GM12878 (cell line): ENCODE measurements at regions of chr12 and their contacts with region 1.

Region 1: DNA sequence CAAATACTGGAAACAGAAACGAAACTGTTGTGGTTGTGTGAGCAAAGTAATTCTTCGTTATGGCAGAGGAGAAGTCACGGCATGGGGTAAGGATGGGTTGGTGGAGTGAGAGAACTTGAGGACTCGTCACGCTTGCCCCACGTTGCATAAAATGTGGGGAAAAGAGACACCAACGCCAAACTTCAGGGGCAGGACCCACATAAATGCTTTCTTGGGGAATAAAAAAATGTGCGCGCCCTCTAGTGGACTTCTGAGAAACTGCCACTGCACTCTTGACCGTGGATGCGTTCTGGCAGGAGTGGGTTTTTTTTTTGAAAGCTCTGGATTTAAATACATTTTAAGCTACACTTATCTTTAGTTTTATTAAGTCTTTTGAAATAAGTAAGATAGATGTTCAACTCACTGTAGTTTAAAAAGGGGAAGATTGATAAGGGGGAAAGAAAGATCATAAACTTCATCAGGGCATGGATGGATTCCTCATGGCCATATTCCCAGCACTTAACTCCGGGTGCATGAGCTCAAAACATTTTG is 4.1 kb upstream of the IGF1 start:
- DNase-seq: peak; percentile 84
- ATAC-seq: peak; percentile 80
- H3K4me3 ChIP-seq: peak overlapping the region; percentile 48
- H3K27ac ChIP-seq: peak overlapping the region; percentile 100
- H3K4me1 ChIP-seq: peaks cover 54% of the 10 kb centered on the region
- H3K27me3 ChIP-seq: no peaks in the 10 kb centered on the region
- CTCF ChIP-seq: peak; percentile 79 to 91 (median 81)
- EP300 ChIP-seq: peak; percentile 87 to 90; a peak in 3 of 4 replicates
- POLR2A ChIP-seq: peak; percentile 43; the same call in 1 of the 2 replicates
- RAD21 ChIP-seq: peak; percentile 80

Region 2: DNA sequence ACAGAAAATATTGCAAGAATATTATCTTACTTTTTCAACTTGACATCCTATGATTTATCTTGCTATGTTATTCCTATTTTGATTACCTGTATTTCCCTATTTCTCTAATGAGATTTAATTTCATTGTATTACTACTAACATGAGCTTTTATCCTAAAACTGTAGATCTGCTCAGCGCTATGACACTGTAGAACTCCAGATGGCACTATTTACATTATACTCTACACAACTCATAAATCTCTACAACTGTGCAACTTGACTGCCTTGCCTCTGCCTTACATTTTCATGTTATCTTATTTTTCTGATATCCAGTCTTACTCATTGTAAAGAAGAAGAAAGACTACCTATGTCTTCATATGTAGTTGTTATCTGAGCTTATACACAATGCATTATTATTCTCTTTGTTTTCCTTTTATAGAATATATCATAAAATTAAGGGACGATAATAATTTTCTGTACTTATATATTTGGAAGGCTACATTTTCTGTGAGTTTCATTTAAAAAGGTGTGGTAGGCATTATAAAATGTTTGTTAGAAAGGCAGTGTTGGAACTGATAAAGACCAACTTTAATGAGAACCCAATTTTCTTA is 388.7 kb before region 1 on chr12:
- CTCF ChIA-PET with region 1: interaction called, 9 read pairs
- POLR2A ChIA-PET with region 1: no interaction called
- RAD21 ChIA-PET with region 1: interaction called, 4 read pairs
- SMC1A ChIA-PET with region 1: interaction called, 5 read pairs
- in situ Hi-C with region 1: no loop called
- intact Hi-C with region 1: loop called (anchors 5 kb)
- DNase-seq: peak; percentile 4
- ATAC-seq: peak; percentile 92
- H3K4me3 ChIP-seq: no peak overlapping the region
- H3K27ac ChIP-seq: no peak overlapping the region
- H3K4me1 ChIP-seq: peaks cover 10% of the 10 kb centered on the region
- H3K27me3 ChIP-seq: no peaks in the 10 kb centered on the region
- CTCF ChIP-seq: peak; percentile 48 to 67 (median 51); a peak in 4 of 6 replicates
- EP300 ChIP-seq: no peak
- POLR2A ChIP-seq: no peak
- RAD21 ChIP-seq: peak; percentile 69

Region 3: DNA sequence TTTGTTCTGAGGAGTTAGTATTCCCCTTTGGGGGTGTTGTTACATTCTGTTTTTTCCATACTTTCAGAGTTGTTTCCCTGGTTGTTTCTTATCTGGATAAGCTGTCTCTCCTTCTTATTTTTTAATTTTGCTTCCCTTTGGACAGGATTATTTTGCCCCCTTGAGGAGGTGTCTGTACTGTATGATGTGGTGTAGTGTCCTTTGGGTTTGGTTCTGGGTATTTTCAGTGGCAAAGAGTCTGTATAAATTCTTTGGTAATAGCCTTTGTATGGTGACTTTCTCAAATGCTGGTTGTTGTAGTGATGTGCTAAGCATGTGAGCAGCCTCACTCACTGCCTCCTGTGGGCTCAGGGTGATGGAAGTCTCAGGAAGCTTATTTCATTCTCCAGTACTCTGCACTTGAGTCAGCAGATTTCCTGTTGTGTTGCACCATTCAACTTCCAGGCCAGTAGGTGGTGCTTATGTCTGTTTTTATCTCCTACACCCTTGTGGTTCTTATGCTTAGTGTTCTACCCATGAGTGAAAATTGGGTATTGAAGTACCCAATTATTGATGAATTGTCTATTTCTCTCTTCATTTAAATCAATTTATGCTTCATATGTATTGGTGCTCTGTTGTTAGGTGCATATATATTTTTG is 183.6 kb before region 1 on chr12:
- CTCF ChIA-PET with region 1: interaction called, 23 read pairs
- POLR2A ChIA-PET with region 1: no interaction called
- RAD21 ChIA-PET with region 1: interaction called, 14 read pairs
- SMC1A ChIA-PET with region 1: interaction called, 17 read pairs
- in situ Hi-C with region 1: no loop called
- intact Hi-C with region 1: loop called (anchors 2 kb)
- DNase-seq: peak; percentile 61
- ATAC-seq: peak; percentile 98
- H3K4me3 ChIP-seq: no peak overlapping the region
- H3K27ac ChIP-seq: no peak overlapping the region
- H3K4me1 ChIP-seq: no peaks in the 10 kb centered on the region
- H3K27me3 ChIP-seq: no peaks in the 10 kb centered on the region
- CTCF ChIP-seq: peak; percentile 41 to 47 (median 42); a peak in 4 of 6 replicates
- EP300 ChIP-seq: no peak
- POLR2A ChIP-seq: no peak
- RAD21 ChIP-seq: peak; percentile 57

Region 4: DNA sequence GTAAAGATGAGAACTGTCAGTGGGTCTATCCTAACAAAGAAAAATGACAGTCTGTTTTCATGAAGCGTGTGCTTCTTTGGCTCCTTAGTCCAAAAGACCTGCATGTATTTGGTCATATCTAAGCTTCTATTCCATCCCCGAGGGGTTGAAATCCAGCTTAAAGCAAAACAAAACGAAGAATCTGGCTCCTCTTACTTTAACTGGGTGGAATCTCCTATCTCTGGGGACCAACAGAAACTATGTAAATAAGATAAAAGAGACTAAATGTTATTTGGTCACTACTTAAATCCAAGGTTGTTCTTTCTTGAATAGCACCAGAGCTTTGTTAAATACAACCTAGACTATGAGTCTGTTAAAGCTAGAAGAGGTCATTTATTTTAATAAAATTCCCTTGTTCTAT is 13.5 kb before region 1 on chr12:
- CTCF ChIA-PET with region 1: interaction called, 14 read pairs
- POLR2A ChIA-PET with region 1: interaction called, 3 read pairs
- RAD21 ChIA-PET with region 1: interaction called, 19 read pairs
- SMC1A ChIA-PET with region 1: interaction called, 42 read pairs
- in situ Hi-C with region 1: no loop called
- intact Hi-C with region 1: no loop called
- DNase-seq: no peak
- ATAC-seq: no peak
- H3K4me3 ChIP-seq: no peak overlapping the region
- H3K27ac ChIP-seq: no peak overlapping the region
- H3K4me1 ChIP-seq: no peaks in the 10 kb centered on the region
- H3K27me3 ChIP-seq: no peaks in the 10 kb centered on the region
- CTCF ChIP-seq: no peak
- EP300 ChIP-seq: no peak
- POLR2A ChIP-seq: no peak
- RAD21 ChIP-seq: no peak

Region 5: DNA sequence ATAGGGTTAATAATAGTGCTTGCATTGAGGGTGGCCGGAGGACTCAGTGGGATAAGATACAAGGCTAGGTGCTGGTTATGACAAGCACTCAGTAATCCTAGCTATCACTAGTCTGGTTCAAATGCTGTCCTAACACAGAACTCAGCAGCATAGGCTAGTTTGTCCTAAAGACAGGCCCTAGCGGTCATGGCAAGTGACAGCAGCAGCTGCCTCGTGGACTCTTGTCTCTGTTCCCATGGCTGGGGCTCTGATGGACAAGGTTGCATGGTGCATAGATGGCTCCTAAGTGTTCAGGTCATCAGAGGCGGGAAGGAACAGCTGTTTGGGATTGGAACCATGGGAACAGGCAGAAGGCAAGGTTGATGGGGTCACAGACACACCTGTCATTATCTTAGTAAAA is 38.3 kb after region 1 on chr12:
- CTCF ChIA-PET with region 1: interaction called, 12 read pairs
- POLR2A ChIA-PET with region 1: no interaction called
- RAD21 ChIA-PET with region 1: interaction called, 7 read pairs
- SMC1A ChIA-PET with region 1: interaction called, 5 read pairs
- in situ Hi-C with region 1: no loop called
- intact Hi-C with region 1: no loop called
- DNase-seq: no peak
- ATAC-seq: no peak
- H3K4me3 ChIP-seq: no peak overlapping the region
- H3K27ac ChIP-seq: no peak overlapping the region
- H3K4me1 ChIP-seq: 0 out of 2 replicates have a peak, but pooled peaks cover 2% of the 10 kb centered on the region
- H3K27me3 ChIP-seq: no peaks in the 10 kb centered on the region
- CTCF ChIP-seq: no peak
- EP300 ChIP-seq: no peak
- POLR2A ChIP-seq: no peak
- RAD21 ChIP-seq: no peak

Region 6: DNA sequence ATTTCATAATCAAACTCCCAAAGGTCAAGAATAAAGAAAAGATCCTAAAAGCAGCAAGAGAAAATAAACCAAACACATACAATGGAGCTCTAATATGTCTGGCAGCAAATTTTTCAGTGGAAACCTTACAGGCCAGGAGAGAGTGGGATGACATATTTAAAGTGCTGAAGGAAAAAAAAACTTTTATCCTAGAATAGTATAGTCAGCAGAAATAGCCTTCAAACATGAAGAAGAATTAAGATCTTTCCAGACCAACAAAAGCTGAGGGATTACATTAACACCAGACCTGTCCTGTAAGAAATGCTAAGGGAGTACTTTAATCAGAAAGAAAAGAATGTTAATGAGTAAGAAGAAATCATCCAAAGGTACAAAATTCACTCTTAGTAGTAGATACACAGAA is 211.6 kb after region 1 on chr12:
- CTCF ChIA-PET with region 1: no interaction called
- POLR2A ChIA-PET with region 1: no interaction called
- RAD21 ChIA-PET with region 1: no interaction called
- SMC1A ChIA-PET with region 1: no interaction called
- in situ Hi-C with region 1: no loop called
- intact Hi-C with region 1: no loop called
- DNase-seq: no peak
- ATAC-seq: no peak
- H3K4me3 ChIP-seq: no peak overlapping the region
- H3K27ac ChIP-seq: no peak overlapping the region
- H3K4me1 ChIP-seq: no peaks in the 10 kb centered on the region
- H3K27me3 ChIP-seq: no peaks in the 10 kb centered on the region
- CTCF ChIP-seq: no peak
- EP300 ChIP-seq: no peak
- POLR2A ChIP-seq: no peak
- RAD21 ChIP-seq: no peak

Region 7: GRCh38 chr12:102769319-102769916 is 284.9 kb after region 1 on chr12:
- CTCF ChIA-PET with region 1: interaction called, 19 read pairs
- POLR2A ChIA-PET with region 1: no interaction called
- RAD21 ChIA-PET with region 1: interaction called, 6 read pairs
- SMC1A ChIA-PET with region 1: interaction called, 6 read pairs
- in situ Hi-C with region 1: no loop called
- intact Hi-C with region 1: no loop called
- DNase-seq: peak; percentile 40
- ATAC-seq: peak; percentile 96
- H3K4me3 ChIP-seq: no peak overlapping the region
- H3K27ac ChIP-seq: no peak overlapping the region
- H3K4me1 ChIP-seq: no peaks in the 10 kb centered on the region
- H3K27me3 ChIP-seq: no peaks in the 10 kb centered on the region
- CTCF ChIP-seq: peak; percentile 80 to 87 (median 82)
- EP300 ChIP-seq: no peak
- POLR2A ChIP-seq: no peak
- RAD21 ChIP-seq: peak; percentile 96